Gastrocnemius medialis (tissue), 4 donors: ENCODE measurements at regions of chr1 and their contacts with region 1.

Region 1: DNA sequence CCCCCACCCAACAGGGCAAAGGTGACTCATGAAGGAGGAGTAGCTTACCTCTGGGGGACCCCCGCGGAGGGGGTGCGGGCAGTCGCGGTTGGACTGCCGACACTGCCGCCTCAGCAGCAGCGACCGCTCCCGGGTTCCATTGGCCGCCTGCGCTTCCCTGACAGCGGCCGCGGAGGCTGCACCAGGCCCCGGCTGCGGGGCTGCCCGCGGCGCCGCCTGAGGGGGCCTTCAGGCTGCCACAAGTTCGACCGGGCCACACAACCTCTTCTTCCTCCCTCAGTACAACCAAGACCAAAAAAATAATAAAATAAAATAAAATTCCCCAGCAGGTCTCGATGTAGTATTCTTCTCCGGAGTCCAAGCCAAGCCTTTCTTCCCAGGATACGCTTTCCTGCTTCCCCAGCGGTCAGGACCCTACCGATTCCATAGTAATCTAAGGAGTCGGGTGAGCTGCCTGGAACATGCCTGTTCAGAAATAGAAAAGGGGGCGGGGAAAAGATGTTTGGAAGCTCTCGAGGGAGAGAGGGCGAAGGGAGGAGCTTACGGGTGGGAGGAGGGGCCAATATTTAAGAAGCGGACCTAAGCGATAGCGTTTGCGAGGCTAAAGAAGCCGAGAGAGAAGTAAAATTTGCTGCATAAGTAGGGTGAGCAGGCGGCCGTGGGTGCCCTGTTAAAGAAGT is at the start of gene PI4KB:
- DNase-seq: peak; percentile 92 to 95
- ATAC-seq: peak; percentile 98
- H3K4me3 ChIP-seq: peak within 1 kb of the TSS; percentile 71 to 97 (median 78)
- H3K27ac ChIP-seq: peak within 1 kb of the TSS; percentile 92 to 96 (median 94)
- H3K4me1 ChIP-seq: peaks cover 32 to 40% of the 10 kb centered on the region in 2 donors
- H3K27me3 ChIP-seq: no peaks in the 10 kb centered on the region
- CTCF ChIP-seq: peak in 2 of 5 experiments; percentile 16 to 17
- POLR2A ChIP-seq: peak; percentile 70 to 91
- total RNA-seq, gene PI4KB: 65.5 to 98.1 (median 77.3) TPM

Region 2: DNA sequence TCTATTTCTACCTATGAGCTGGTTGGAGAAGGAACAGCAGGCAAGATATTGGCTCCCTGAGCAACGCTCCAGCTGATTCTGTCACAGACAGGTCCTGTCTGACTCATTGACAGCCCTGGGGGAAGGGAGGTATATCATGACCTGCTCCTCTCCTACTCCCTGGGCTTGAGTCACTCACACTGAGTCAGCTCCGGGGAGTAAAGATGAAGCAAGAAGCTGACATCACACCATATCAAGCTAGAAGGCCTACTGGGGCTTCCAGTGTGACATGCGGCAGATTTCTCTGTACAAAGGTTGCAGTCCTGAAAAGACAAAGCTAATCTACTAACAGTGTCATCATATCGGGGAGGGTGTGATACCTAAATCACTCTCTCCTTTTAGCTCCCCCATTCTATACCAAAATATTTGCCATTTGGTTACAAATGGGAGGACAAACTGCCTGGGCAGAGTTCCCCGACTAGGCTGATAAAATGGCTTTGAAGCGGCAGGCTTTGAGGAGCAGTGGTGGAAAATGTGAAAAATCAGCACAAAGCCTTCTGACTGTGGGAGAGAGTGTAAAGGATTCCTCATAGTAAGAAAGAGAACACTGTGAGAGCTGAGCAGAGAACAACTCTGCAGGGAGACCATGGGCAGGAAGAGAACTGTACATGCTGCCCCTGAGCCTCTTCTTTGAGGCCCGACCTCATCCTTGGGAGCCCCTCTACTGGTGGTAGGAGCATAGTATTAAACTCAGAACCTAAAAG is 15.6 kb before region 1 on chr1:
- in situ Hi-C with region 1: no loop called
- intact Hi-C with region 1: loop called (anchors 1 kb)
- DNase-seq: peak; percentile 95 to 98
- ATAC-seq: peak; percentile 95 to 98
- H3K4me3 ChIP-seq: peak overlapping the region in 2 of 4 donors; percentile 8
- H3K27ac ChIP-seq: peak overlapping the region; percentile 91 to 95 (median 93)
- H3K4me1 ChIP-seq: peaks cover 55 to 69% of the 10 kb centered on the region in 2 donors
- H3K27me3 ChIP-seq: no peaks in the 10 kb centered on the region
- CTCF ChIP-seq: no peak
- POLR2A ChIP-seq: peak; percentile 15 to 16